B cell (primary cell): ENCODE measurements at regions of chr10 and their contacts with region 1.

Region 1: DNA sequence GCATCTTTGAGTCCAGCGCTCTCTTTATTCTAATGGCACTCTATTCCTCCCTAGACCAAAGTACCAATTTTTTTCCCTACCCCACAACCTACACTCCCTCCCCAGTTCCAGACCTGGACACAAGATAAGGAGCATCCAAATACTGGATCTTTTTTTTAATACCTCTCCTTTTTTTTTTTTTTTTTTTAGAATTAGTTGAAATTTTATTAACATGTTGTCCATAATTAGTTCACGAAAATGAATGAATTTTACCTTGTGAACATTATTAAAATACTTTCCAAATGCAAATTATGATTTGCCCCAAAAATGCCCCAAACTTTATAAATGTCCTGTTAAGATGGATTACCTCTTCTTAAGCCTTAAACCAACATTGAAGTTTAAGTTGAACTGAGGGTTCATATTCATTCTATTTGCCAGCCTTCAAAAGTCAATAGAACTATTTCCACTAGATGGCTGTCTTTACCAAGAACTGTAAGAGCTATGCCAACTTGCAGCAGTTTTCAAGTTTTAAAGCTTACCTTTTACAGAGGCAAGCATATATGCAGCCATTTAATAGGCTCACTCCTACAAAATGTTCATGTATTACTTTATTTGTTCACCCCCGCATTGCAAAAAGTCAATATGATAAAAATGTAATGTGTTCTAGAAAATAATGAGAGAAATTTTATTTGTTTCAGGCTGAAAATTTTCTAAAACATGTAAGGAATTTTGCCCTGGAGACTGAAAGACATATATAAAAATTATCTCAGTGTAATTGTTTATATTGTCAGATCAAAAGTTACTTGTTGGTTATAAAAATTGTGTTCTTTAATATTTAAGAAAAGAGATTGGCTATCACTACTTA is 39.7 kb upstream of the TNKS2 start:
- DNase-seq: peak; percentile 67
- ATAC-seq: peak; percentile 47
- H3K4me3 ChIP-seq: no peak overlapping the region
- H3K4me3 Mint-ChIP-seq: no peak overlapping the region
- H3K27ac ChIP-seq: no peak overlapping the region
- H3K27ac Mint-ChIP-seq: no peak overlapping the region
- H3K4me1 ChIP-seq: no peaks in the 10 kb centered on the region
- H3K4me1 Mint-ChIP-seq: no peaks in the 10 kb centered on the region
- H3K27me3 ChIP-seq: peaks cover 0 to 6% (median 2%) of the 10 kb centered on the region in 4 experiments
- H3K27me3 Mint-ChIP-seq: peaks cover 39% of the 10 kb centered on the region
- CTCF ChIP-seq: peak; percentile 79

Region 2: DNA sequence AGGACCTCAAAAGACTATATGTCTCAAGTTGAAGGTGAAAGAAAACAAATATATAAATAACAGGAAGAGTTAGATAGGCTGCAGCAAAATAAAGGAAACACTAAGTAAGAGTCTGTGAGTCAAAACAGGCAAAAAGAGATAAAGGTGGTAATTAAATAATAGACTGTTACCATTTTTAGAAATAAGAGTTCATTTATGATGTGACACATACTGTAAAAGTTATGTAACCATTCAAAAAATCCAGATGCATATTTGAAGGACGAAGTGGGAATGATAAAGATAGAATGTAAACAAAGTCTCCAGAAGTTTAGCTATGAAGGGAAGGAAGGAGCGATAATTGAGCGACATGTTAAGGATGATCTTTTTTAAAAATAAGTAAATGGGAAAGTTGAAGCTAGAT is 297.8 kb before region 1 on chr10:
- CTCF ChIA-PET with region 1: no interaction called
- POLR2A ChIA-PET with region 1: no interaction called
- intact Hi-C with region 1: no loop called
- DNase-seq: no peak
- ATAC-seq: no peak
- H3K4me3 ChIP-seq: no peak overlapping the region
- H3K4me3 Mint-ChIP-seq: no peak overlapping the region
- H3K27ac ChIP-seq: no peak overlapping the region
- H3K27ac Mint-ChIP-seq: no peak overlapping the region
- H3K4me1 ChIP-seq: no peaks in the 10 kb centered on the region
- H3K4me1 Mint-ChIP-seq: no peaks in the 10 kb centered on the region
- H3K27me3 ChIP-seq: no peaks in the 10 kb centered on the region
- H3K27me3 Mint-ChIP-seq: no peaks in the 10 kb centered on the region
- CTCF ChIP-seq: no peak

Region 3: GRCh38 chr10:91771907-91772306 is 13.4 kb after region 1 on chr10:
- CTCF ChIA-PET with region 1: interaction called, 16 read pairs
- POLR2A ChIA-PET with region 1: no interaction called
- intact Hi-C with region 1: no loop called
- DNase-seq: no peak
- ATAC-seq: no peak
- H3K4me3 ChIP-seq: no peak overlapping the region
- H3K4me3 Mint-ChIP-seq: no peak overlapping the region
- H3K27ac ChIP-seq: no peak overlapping the region
- H3K27ac Mint-ChIP-seq: no peak overlapping the region
- H3K4me1 ChIP-seq: no peaks in the 10 kb centered on the region
- H3K4me1 Mint-ChIP-seq: no peaks in the 10 kb centered on the region
- H3K27me3 ChIP-seq: peaks cover 0 to 9% (median 4%) of the 10 kb centered on the region in 4 experiments
- H3K27me3 Mint-ChIP-seq: no peaks in the 10 kb centered on the region
- CTCF ChIP-seq: no peak

Region 4: GRCh38 chr10:91816981-91817380 is 58.5 kb after region 1 on chr10:
- CTCF ChIA-PET with region 1: interaction called, 19 read pairs
- POLR2A ChIA-PET with region 1: no interaction called
- intact Hi-C with region 1: no loop called
- DNase-seq: no peak
- ATAC-seq: no peak
- H3K4me3 ChIP-seq: no peak overlapping the region
- H3K4me3 Mint-ChIP-seq: no peak overlapping the region
- H3K27ac ChIP-seq: no peak overlapping the region
- H3K27ac Mint-ChIP-seq: no peak overlapping the region
- H3K4me1 ChIP-seq: no peaks in the 10 kb centered on the region
- H3K4me1 Mint-ChIP-seq: peaks cover 6% of the 10 kb centered on the region
- H3K27me3 ChIP-seq: no peaks in the 10 kb centered on the region
- H3K27me3 Mint-ChIP-seq: no peaks in the 10 kb centered on the region
- CTCF ChIP-seq: no peak

Region 5: DNA sequence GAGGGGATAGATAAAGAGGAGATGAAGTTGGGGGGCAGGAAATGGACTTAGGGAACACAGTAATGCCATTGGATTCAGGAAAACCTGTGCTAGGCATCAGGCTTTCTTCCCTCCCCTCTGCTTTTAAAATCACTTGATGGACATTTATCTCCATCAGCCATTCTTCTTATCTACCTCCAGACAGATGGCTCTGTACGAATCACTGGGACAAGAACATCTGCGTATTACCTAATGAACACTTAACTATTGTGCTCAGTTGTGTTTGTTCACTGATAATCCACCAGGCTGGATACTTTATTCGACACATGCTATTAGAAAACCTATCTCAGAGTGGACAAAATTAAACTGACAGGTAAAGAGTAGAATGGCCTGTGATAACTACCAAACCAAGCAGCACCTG is 79.7 kb after region 1 on chr10:
- CTCF ChIA-PET with region 1: interaction called, 4 read pairs
- POLR2A ChIA-PET with region 1: no interaction called
- intact Hi-C with region 1: loop called (anchors 5 kb)
- DNase-seq: no peak
- ATAC-seq: no peak
- H3K4me3 ChIP-seq: no peak overlapping the region
- H3K4me3 Mint-ChIP-seq: no peak overlapping the region
- H3K27ac ChIP-seq: no peak overlapping the region
- H3K27ac Mint-ChIP-seq: no peak overlapping the region
- H3K4me1 ChIP-seq: no peaks in the 10 kb centered on the region
- H3K4me1 Mint-ChIP-seq: no peaks in the 10 kb centered on the region
- H3K27me3 ChIP-seq: no peaks in the 10 kb centered on the region
- H3K27me3 Mint-ChIP-seq: no peaks in the 10 kb centered on the region
- CTCF ChIP-seq: no peak

Region 6: DNA sequence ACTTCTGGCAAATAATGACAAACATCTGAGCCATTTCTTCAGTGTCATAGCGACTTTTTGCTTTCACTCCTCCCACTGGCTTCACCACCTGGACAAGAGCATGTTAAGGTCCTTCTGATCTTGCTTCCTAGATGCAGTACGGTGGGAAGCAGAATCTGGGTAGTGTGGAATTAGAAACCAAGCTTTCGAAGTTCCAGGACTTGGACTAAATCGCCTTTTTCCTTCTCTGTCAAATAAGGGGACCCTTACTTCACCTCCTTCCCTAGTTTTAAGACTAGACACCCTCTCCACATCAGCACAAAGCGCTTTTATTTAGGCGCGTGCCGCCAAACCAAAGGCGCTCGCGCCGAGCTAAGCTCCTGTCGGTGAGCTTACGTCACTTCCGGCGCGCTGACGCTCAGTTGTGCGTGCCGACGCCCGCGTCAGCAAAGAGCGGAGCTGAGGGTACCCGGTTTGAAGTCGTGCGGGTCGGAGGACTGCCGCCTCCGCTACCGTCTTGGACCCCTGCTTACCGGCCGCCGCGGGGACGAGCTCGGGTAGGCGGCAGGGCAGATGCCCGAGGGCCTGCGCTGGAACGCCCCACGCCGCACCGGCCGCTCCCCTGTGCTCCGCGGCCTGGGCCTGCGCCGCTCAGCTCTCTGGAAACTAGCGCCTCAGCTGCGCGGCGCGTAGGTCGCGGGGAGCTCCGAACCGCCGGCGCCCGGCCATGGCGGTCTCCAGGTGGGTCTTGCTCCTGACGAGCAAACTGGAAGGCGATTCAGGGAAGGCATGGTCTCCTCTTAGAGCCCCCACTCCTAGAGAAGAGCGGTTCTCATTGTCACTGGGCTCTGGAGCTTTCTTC is 165.1 kb after region 1 on chr10 and contains the start of gene BTAF1:
- CTCF ChIA-PET with region 1: interaction called, 13 read pairs
- POLR2A ChIA-PET with region 1: no interaction called
- intact Hi-C with region 1: no loop called
- DNase-seq: peak; percentile 96
- ATAC-seq: peak; percentile 93
- H3K4me3 ChIP-seq: peak within 1 kb of the TSS; percentile 88 to 98 (median 93)
- H3K4me3 Mint-ChIP-seq: peak within 1 kb of the TSS; percentile 86
- H3K27ac ChIP-seq: peak within 1 kb of the TSS; percentile 93 to 99
- H3K27ac Mint-ChIP-seq: peak within 1 kb of the TSS; percentile 100
- H3K4me1 ChIP-seq: peaks cover 18 to 20% of the 10 kb centered on the region in 2 donors
- H3K4me1 Mint-ChIP-seq: peaks cover 39% of the 10 kb centered on the region
- H3K27me3 ChIP-seq: peaks cover 0 to 4% (median 2%) of the 10 kb centered on the region in 4 experiments
- H3K27me3 Mint-ChIP-seq: peaks cover 3% of the 10 kb centered on the region
- CTCF ChIP-seq: no peak
- total RNA-seq, gene BTAF1: 78.1 and 81.7 TPM in 2 replicates